ENCODE measurements at regions of chr3 and their contacts with region 1.

Region 1: DNA sequence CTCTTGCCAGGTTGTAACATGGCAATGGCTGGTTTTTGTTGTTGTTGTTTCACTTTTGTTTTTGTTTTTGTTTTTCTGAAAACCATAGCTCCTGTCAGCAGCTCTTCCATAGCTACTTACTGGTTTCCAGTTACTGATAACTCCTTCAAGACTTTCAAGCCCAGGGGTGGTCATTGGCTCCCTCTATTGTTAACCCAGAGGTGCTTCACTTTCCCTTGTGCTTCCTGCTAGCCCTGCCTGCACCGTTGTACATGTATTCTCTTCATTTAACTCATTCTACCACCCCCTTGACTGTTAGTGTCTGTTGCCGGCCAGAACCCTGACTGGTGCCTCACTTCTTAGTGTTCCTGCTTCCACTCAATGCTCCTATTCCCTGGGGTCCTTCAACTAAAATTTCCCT is 4.2 kb upstream of the TRAT1 start:
- DNase-seq: peak in 8 of 9 donors; percentile 43 to 82 (median 71)
- ATAC-seq: peak; percentile 95
- H3K4me3 ChIP-seq: no peak overlapping the region
- H3K4me3 Mint-ChIP-seq: peak overlapping the region in 8 of 10 donors; percentile 17 to 75 (median 55)
- H3K27ac ChIP-seq: no peak overlapping the region
- H3K27ac Mint-ChIP-seq: peak overlapping the region; percentile 2 to 100 (median 80)
- H3K4me1 ChIP-seq: peaks cover 26 to 29% of the 10 kb centered on the region in 2 donors
- H3K4me1 Mint-ChIP-seq: peaks cover 14 to 44% (median 31%) of the 10 kb centered on the region in 7 donors
- H3K27me3 ChIP-seq: no peaks in the 10 kb centered on the region
- H3K27me3 Mint-ChIP-seq: no peaks in the 10 kb centered on the region

Region 2: DNA sequence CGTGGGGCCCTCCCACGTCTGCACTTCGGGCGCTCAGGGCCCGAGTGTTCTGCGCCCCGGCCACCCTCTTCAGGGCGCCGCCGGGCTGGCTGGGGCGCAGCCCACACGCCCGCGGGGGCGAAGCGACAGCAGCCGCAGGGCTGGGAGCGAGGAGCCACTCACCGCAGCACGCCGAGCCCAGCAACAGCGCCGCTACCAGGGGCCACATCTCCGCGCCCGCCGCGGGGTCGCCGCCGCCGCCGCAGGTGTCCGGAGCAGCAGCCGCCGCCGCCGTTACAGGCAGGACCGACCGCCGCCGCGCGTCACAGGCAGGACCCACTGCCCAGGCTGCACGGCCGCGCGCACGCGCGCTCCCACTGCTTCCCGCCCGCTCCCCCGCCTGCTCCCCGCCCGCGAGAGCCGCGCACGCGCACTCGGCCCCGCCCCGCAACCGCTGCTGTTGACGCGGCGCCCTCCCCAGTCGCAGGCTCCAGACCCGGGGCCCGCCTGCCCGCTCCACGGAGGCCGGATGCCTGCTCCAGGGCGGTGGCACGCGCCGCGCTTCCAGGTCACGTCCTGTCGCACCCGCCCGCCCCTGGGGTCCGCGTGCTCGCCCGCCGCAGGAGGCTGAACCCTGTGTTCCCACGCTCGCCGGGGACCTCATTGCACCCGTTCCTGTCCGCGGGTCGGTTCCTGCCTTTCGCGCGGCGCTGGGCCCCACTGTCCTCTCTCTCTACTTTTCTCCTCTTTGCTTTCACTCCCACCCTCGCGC is 727.5 kb before region 1 on chr3 and contains the start of gene CD47:
- CTCF ChIA-PET with region 1: no interaction called
- POLR2A ChIA-PET with region 1: no interaction called
- intact Hi-C with region 1: loop called in 1 of 2 experiments (anchors 2 kb)
- DNase-seq: peak; percentile 94 to 98 (median 98)
- ATAC-seq: peak; percentile 85
- H3K4me3 ChIP-seq: peak within 1 kb of the TSS; percentile 92
- H3K4me3 Mint-ChIP-seq: peak within 1 kb of the TSS in 8 of 10 donors; percentile 85 to 100 (median 98)
- H3K27ac ChIP-seq: peak within 1 kb of the TSS; percentile 100
- H3K27ac Mint-ChIP-seq: peak within 1 kb of the TSS; percentile 94 to 100 (median 99)
- H3K4me1 ChIP-seq: peaks cover 43 to 50% of the 10 kb centered on the region in 2 donors
- H3K4me1 Mint-ChIP-seq: peaks cover 33 to 56% (median 41%) of the 10 kb centered on the region in 7 donors
- H3K27me3 ChIP-seq: no peaks in the 10 kb centered on the region
- H3K27me3 Mint-ChIP-seq: peaks cover 0 to 10% (median 0%) of the 10 kb centered on the region in 5 donors
- total RNA-seq, gene CD47: 130 to 232 (median 136) TPM

Region 3: DNA sequence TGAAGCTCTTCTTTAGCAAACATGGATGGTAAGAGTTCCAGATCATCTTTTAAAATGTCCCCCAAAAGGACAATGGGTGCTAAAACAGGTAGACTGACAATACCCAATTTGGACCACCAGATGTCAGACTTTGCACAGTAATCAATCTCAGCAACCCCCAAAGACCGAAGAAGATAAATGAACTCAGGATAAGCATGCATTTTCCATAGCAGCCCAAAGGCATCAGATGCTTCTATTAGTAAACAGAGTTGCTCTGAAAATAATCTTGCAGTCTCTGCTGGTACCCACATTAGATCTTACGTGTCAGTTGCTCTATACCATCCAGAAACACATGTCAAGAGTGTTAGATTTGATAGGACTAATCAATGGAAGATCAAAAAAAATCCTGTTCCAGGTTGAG is 328.6 kb before region 1 on chr3:
- CTCF ChIA-PET with region 1: interaction called, 7 read pairs
- POLR2A ChIA-PET with region 1: interaction called, 5 read pairs
- intact Hi-C with region 1: loop called (anchors 1 kb)
- DNase-seq: peak in 7 of 9 donors; percentile 43 to 64 (median 54)
- ATAC-seq: peak; percentile 86
- H3K4me3 ChIP-seq: no peak overlapping the region
- H3K4me3 Mint-ChIP-seq: no peak overlapping the region
- H3K27ac ChIP-seq: no peak overlapping the region
- H3K27ac Mint-ChIP-seq: no peak overlapping the region
- H3K4me1 ChIP-seq: no peaks in the 10 kb centered on the region
- H3K4me1 Mint-ChIP-seq: peaks cover 0 to 3% (median 0%) of the 10 kb centered on the region in 7 donors
- H3K27me3 ChIP-seq: no peaks in the 10 kb centered on the region
- H3K27me3 Mint-ChIP-seq: peaks cover 0 to 13% (median 0%) of the 10 kb centered on the region in 5 donors

Region 4: GRCh38 chr3:108602249-108602934 is 216.0 kb before region 1 on chr3:
- CTCF ChIA-PET with region 1: interaction called, 4 read pairs
- POLR2A ChIA-PET with region 1: interaction called, 3 read pairs
- intact Hi-C with region 1: loop called in 1 of 2 experiments (anchors 2 kb)
- DNase-seq: peak in 7 of 9 donors; percentile 34 to 74 (median 57)
- ATAC-seq: peak; percentile 92
- H3K4me3 ChIP-seq: peak overlapping the region; percentile 22
- H3K4me3 Mint-ChIP-seq: peak overlapping the region; percentile 25 to 81 (median 74)
- H3K27ac ChIP-seq: peak overlapping the region; percentile 69
- H3K27ac Mint-ChIP-seq: peak overlapping the region; percentile 76 to 97 (median 93)
- H3K4me1 ChIP-seq: peaks cover 38 to 46% of the 10 kb centered on the region in 2 donors
- H3K4me1 Mint-ChIP-seq: peaks cover 27 to 64% (median 54%) of the 10 kb centered on the region in 7 donors
- H3K27me3 ChIP-seq: no peaks in the 10 kb centered on the region
- H3K27me3 Mint-ChIP-seq: no peaks in the 10 kb centered on the region

Region 5: DNA sequence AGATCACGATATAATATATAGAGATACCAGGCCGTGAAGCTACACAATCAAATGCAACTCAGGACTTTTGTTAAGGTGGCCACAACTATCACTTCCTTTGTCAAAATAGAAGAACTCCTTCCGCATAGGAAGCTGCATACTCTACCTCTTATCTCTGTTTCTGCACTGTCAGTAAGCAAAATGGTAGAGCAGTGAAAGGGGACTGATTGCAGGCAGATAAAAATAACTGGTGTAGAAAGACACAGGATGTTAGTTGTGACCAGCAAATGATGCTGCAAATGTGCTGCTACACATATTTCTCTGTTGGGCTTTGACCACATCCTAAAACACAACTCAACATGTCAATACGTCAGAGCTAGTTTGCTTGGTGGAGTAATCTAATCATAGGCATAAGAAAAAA is 12.1 kb before region 1 on chr3:
- CTCF ChIA-PET with region 1: interaction called, 25 read pairs
- POLR2A ChIA-PET with region 1: interaction called, 9 read pairs
- intact Hi-C with region 1: loop called (anchors 1 kb)
- DNase-seq: peak in 7 of 9 donors; percentile 64 to 90 (median 83)
- ATAC-seq: peak; percentile 96
- H3K4me3 ChIP-seq: no peak overlapping the region
- H3K4me3 Mint-ChIP-seq: peak overlapping the region; percentile 25 to 70 (median 48)
- H3K27ac ChIP-seq: peak overlapping the region; percentile 20
- H3K27ac Mint-ChIP-seq: peak overlapping the region; percentile 29 to 93 (median 81)
- H3K4me1 ChIP-seq: peaks cover 16 to 18% of the 10 kb centered on the region in 2 donors
- H3K4me1 Mint-ChIP-seq: peaks cover 7 to 32% (median 23%) of the 10 kb centered on the region in 7 donors
- H3K27me3 ChIP-seq: no peaks in the 10 kb centered on the region
- H3K27me3 Mint-ChIP-seq: no peaks in the 10 kb centered on the region

Region 6: DNA sequence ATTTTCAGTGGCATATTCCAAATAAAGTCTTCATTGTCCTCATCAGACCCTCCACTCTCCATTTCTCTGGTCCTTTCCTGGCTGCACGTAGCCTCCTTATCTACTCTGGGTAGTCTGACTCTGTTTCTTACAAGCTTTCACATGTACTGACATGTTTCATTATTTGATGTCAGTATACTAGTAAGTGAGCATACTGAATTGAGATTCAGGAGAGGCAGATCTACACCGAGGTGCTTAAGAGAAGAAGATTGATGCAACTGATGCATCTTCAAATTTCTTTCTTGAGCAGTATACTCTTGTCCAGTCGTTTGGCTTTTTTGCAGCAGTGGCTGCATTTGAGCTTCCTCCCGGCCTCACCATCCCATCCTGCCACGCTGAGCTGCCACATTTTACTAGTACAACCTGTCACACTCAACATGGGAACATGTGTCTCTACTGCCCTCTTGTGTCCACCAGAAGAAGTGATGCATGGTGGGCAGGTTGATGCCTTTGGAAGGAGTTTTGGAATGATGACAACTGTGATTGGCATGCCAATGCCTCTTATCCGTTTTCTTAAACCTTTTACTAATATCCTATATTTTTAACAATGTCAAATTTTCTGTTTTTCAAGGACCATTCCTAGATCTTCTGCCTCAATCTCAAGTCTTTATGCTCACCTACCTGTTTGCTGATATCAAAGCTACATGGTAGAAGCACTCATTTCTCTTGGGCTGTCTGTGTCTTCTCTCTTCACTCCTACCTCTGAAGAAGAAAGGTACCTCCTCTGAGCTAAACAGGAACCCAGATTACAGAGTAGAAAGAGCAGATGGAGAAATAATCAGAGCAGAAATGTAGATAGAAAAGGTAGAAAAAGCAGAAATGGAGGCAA is 96.6 kb after region 1 on chr3:
- CTCF ChIA-PET with region 1: interaction called, 42 read pairs
- POLR2A ChIA-PET with region 1: interaction called, 4 read pairs
- intact Hi-C with region 1: loop called (anchors 1 kb)
- DNase-seq: peak; percentile 17 to 82 (median 71)
- ATAC-seq: peak; percentile 94
- H3K4me3 ChIP-seq: no peak overlapping the region
- H3K4me3 Mint-ChIP-seq: peak overlapping the region; percentile 43 to 72 (median 66)
- H3K27ac ChIP-seq: no peak overlapping the region
- H3K27ac Mint-ChIP-seq: peak overlapping the region in 6 of 9 donors; percentile 11 to 60 (median 32)
- H3K4me1 ChIP-seq: peaks cover 5 to 9% of the 10 kb centered on the region in 2 donors
- H3K4me1 Mint-ChIP-seq: peaks cover 12 to 21% (median 18%) of the 10 kb centered on the region in 7 donors
- H3K27me3 ChIP-seq: no peaks in the 10 kb centered on the region
- H3K27me3 Mint-ChIP-seq: peaks cover 0 to 33% (median 0%) of the 10 kb centered on the region in 5 donors